AG04449 (cell line): ENCODE measurements at regions of chr15 and their contacts with region 1.

Region 1: DNA sequence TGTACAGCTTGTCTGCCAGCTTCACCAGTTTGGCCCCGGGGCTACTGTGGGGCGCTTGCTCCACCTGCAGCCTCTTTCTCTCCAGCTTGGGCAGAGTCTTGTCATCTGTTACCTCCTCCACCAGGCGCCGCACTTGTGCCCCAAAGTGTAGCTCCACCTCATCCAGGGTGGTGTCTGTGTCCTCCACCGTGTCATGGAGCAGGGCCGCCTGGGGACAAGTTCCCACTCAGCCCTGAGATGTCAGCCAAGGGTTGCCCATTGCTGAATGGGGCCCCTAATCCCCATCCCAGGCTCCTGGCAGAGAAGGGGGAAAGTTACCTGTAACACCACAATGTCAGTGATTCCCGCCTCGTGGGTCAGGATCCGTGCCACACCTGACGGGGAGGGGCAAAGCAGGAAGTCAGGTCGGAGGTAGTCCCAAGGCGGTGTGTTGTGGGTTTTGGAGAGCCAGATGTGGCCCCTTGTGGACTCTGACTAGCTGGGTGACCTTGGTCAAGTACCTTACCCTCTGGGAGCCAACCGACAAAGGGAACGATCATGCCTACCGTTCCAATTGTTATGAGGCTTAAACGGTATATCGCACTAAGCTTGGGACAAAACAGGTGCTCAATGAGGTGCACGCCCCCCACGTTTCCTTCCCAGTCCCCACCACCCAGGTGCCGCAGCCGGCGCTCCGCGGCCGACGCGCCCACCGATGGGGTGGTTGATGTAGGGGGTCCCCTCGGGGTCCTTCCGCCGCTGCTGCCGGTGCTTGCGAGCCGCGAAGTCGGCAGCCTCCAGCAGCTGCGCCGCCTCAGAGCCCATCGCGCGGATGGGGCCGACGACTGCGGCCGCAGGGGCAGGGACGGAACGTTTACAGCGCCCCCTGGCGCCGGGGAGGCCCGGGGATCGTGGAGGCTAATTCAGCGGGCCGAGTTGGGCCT is at the start of gene HDDC3:
- DNase-seq: no peak
- H3K4me3 ChIP-seq: peak within 1 kb of the TSS; percentile 90
- CTCF ChIP-seq: peak; percentile 98

Region 2: GRCh38 chr15:90648137-90649070 is 283.6 kb before region 1 on chr15:
- CTCF ChIA-PET with region 1: interaction called, 91 read pairs
- POLR2A ChIA-PET with region 1: interaction called, 3 read pairs
- DNase-seq: no peak
- H3K4me3 ChIP-seq: no peak overlapping the region
- CTCF ChIP-seq: peak; percentile 78

Region 3: GRCh38 chr15:90886041-90886614 is 45.9 kb before region 1 on chr15:
- CTCF ChIA-PET with region 1: interaction called, 49 read pairs
- POLR2A ChIA-PET with region 1: no interaction called
- DNase-seq: no peak
- H3K4me3 ChIP-seq: no peak overlapping the region
- CTCF ChIP-seq: peak; percentile 95

Region 4: GRCh38 chr15:90915808-90916440 is 16.1 kb before region 1 on chr15:
- CTCF ChIA-PET with region 1: interaction called, 186 read pairs
- POLR2A ChIA-PET with region 1: no interaction called
- DNase-seq: no peak
- H3K4me3 ChIP-seq: no peak overlapping the region
- CTCF ChIP-seq: no peak

Region 5: DNA sequence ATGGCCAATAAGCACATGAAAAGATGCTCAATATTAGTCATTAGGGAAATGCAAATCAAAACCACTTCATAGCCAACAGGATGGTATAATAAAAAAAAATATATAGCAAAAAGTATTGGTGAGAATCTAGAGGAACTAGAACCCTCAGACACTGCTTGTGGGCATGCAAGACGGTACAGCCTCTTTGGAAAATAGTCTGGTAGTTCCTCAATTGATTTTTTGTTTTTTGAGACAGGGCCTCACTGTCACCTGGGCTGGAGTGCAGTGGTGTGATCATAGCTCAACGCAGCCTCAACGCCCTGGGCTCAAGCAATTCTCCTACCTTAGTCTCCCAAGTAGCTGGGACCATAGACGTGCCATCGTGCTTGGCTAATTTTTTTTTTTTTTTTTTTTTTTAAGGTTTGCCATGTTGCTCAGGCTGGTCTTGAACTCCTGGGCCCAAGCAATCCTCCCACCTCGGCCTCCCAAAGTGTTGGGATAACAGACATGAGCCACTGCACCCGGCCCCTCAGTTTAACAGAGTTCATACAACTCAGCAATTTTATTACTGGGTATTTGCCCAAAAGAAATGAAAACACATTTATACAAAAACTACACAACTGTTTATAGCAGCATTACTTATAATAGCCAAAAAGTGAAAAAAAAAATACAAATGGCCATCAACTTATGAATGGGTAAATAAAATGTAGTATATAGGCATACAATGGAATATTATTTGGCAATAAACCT is 57.2 kb after region 1 on chr15:
- CTCF ChIA-PET with region 1: interaction called, 15 read pairs
- POLR2A ChIA-PET with region 1: no interaction called
- DNase-seq: no peak
- H3K4me3 ChIP-seq: no peak overlapping the region
- CTCF ChIP-seq: no peak